Breast epithelium (tissue), 4 donors: ENCODE measurements at regions of chr3 and their contacts with region 1.

Region 1: DNA sequence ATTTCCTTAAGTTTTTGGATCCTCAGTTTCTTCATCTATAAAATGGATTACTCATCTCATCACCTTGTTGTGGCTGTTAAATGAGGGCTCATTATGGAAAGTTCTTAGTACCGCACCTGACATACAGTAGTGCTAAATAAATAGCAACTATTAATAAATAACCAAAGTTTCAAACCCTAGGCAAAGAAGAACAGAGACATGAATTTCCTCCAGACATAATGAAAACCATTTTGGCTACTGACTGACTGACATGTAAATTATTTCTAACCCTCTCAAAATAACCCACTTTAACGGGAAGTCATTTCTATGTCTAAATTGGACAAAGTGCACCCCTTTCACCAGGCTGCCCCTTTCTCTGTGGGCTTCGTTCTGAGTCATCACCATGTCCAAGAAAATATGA is 17.4 kb upstream of the KLHL6 start:
- DNase-seq: no peak
- H3K4me3 ChIP-seq: no peak overlapping the region
- H3K27ac ChIP-seq: no peak overlapping the region
- H3K4me1 ChIP-seq: no peaks in the 10 kb centered on the region
- H3K27me3 ChIP-seq: no peaks in the 10 kb centered on the region
- CTCF ChIP-seq: no peak
- POLR2A ChIP-seq: no peak

Region 2: DNA sequence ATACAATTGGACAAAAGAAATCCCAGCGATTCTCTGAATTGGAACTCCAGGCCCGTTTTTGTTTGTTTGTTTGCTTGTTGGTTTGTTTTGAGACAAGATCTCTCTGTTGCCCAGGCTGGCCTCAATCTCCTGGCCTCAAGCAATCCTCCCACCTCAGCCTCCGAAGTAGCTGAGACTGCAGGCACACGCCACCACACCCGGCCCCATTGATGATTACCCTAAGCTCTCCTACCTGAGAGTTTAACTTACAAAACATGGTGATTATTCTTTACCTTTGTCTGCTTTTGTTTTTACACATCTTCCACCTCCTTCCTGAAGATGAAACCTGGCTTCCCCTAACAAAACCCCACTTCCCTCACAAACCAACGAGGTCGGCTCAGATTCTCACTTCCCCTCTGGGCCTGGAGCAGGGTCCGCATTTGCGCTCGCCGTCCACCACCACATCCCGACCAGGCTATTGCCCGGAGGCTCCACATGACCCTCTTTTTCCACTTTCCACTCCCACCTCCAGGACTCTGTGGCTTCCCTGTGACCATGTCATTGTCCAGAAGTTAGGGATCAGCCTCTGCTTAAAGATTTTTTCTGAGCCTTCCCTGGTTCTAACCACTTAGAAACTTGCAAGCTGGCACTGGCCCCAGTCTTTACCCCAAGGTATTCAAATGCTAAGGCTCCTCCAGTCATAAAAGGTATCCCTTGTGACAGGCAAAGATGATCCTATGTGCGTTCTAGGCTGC is 32.3 kb before region 1 on chr3:
- intact Hi-C with region 1: no loop called
- DNase-seq: no peak
- H3K4me3 ChIP-seq: no peak overlapping the region
- H3K27ac ChIP-seq: no peak overlapping the region
- H3K4me1 ChIP-seq: no peaks in the 10 kb centered on the region
- H3K27me3 ChIP-seq: no peaks in the 10 kb centered on the region
- CTCF ChIP-seq: no peak
- POLR2A ChIP-seq: no peak

Region 3: DNA sequence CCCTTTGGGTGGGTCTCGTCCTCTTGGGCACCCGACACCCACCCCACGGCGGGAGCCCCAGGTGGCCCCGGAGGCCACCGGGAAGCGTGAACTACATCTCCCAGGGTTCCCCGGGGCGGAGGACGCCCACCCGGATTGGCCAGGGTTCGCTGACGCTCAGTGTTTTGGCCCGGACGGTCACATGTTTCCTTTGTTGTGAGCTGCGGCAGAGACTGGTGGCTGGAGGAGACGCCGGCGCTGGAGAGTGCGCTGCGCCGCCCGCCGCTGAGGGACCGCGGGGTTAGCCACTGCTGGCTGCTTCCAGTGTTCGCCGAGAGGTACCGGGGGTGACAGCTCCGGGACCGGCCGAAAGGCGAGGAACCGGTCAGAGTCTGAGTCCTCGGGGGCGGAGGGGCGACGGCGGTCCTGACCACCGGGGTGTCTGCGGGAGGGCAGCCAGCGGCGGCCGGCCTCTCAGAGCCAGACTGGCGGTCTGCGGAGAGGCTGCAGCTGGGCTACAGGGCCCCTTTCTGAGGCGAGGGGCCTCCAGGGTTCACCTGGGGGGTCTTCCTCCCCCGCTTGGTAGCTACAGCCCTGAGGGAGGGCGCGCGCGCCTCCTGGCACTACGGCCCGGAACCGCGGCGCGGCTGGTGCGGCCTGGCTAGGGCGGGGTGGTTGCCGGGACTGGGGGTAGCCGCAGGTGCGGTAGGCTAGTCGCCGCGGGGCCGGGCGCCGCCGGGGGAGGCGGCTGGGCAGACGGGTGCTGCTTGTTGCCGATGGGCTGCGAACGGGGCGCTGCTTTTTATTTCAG is 62.7 kb after region 1 on chr3 and contains the start of gene KLHL24:
- intact Hi-C with region 1: loop called (anchors 2 kb)
- DNase-seq: peak; percentile 93 to 95
- H3K4me3 ChIP-seq: peak within 1 kb of the TSS; percentile 97 to 100 (median 100)
- H3K27ac ChIP-seq: peak within 1 kb of the TSS; percentile 100
- H3K4me1 ChIP-seq: peaks cover 0 to 4% of the 10 kb centered on the region in 2 donors
- H3K27me3 ChIP-seq: no peaks in the 10 kb centered on the region
- CTCF ChIP-seq: no peak
- POLR2A ChIP-seq: peak; percentile 99
- total RNA-seq, gene KLHL24: 108 to 184 (median 129) TPM

Region 4: GRCh38 chr3:183711516-183711915 is 138.6 kb after region 1 on chr3:
- intact Hi-C with region 1: no loop called
- DNase-seq: no peak
- H3K4me3 ChIP-seq: no peak overlapping the region
- H3K27ac ChIP-seq: no peak overlapping the region
- H3K4me1 ChIP-seq: no peaks in the 10 kb centered on the region
- H3K27me3 ChIP-seq: no peaks in the 10 kb centered on the region
- CTCF ChIP-seq: no peak
- POLR2A ChIP-seq: no peak